Sigmoid colon (tissue), 7 donors: ENCODE measurements at regions of chr16 and their contacts with region 1.

Region 1: DNA sequence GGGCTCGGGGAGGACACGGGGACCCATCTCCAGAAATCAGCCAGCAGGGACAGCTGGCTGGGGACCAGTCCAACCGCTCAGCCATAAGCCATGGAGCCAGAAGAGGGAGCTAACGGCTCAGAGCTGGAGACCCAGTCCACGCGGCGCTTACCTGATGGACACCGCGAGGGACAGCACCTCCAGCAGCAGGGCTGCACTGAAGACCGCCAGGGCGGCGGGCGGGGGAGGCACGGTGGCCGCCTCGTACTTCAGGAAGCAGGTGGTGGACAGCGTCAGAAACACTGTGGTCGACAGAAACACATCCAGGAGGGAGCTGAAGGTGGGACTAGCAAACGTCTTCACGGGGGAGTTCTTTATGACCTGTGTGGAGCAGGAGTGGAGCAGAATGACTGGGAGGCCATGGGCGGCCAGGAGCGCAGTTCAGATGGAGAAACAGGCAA is 102.6 kb upstream of the CREBBP start:
- DNase-seq: peak; percentile 85
- H3K4me3 ChIP-seq: no peak overlapping the region
- H3K27ac ChIP-seq: no peak overlapping the region
- H3K4me1 ChIP-seq: peaks cover 0 to 21% (median 18%) of the 10 kb centered on the region in 4 donors
- H3K27me3 ChIP-seq: no peaks in the 10 kb centered on the region
- CTCF ChIP-seq: peak; percentile 53 to 73 (median 66)
- EP300 ChIP-seq: no peak
- POLR2A ChIP-seq: no peak

Region 2: GRCh38 chr16:4183237-4184036 is 200.3 kb after region 1 on chr16:
- intact Hi-C with region 1: loop called (anchors 10 kb)
- DNase-seq: peak; percentile 95
- H3K4me3 ChIP-seq: peak overlapping the region; percentile 59 to 80 (median 62)
- H3K27ac ChIP-seq: peak overlapping the region; percentile 93 to 99 (median 94)
- H3K4me1 ChIP-seq: peaks cover 0 to 8% (median 7%) of the 10 kb centered on the region in 4 donors
- H3K27me3 ChIP-seq: no peaks in the 10 kb centered on the region
- CTCF ChIP-seq: no peak
- EP300 ChIP-seq: peak in 1 of 4 donors; percentile 38
- POLR2A ChIP-seq: no peak